ENCODE measurements at regions of chr1 and their contacts with region 1.

Region 1: GRCh38 chr1:167533851-167534300 is 15.5 kb upstream of the CD247 start:
- H3K4me3 Mint-ChIP-seq: no peak overlapping the region
- H3K27ac Mint-ChIP-seq: no peak overlapping the region
- H3K4me1 Mint-ChIP-seq: peaks cover 31% of the 10 kb centered on the region
- H3K27me3 Mint-ChIP-seq: no peaks in the 10 kb centered on the region

Region 2: DNA sequence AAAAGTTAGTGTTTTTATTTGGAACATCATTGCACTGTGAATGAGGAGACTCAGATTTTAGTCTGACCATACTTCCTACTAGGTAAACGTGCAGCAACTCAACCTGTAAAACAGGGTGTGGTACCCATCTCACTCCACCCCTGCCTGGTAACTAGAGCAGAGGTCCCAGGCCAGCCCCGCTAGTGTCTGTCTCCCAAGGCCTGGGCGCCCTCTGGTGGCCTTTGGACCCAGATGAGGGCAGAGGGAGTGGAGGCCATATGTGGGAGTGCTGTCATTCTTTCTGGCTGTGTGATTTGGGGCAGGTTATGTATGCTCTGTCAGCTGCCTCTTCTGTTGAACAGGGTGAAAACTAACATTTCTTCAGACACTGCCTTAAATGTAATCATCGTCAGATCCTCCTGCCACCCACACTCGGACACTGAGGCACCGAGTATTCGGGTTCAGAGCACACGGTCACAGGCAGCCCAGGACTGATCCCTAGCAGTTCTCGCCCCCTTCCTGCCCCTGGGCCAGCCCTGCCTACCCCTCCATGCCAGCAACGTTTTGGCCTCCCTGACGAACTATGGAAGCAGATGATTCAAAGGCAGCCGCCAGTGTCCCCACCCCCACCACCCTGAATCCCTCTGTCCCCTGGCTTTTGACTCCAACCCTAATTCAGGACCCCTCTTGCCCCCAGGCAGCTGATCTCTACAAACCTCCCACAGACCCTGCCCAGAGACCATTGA is 91.6 kb before region 1 on chr1:
- intact Hi-C with region 1: loop called (anchors 5 kb)
- H3K4me3 Mint-ChIP-seq: no peak overlapping the region
- H3K27ac Mint-ChIP-seq: peak overlapping the region; percentile 54
- H3K4me1 Mint-ChIP-seq: peaks cover 43% of the 10 kb centered on the region
- H3K27me3 Mint-ChIP-seq: peaks cover 27% of the 10 kb centered on the region

Region 3: DNA sequence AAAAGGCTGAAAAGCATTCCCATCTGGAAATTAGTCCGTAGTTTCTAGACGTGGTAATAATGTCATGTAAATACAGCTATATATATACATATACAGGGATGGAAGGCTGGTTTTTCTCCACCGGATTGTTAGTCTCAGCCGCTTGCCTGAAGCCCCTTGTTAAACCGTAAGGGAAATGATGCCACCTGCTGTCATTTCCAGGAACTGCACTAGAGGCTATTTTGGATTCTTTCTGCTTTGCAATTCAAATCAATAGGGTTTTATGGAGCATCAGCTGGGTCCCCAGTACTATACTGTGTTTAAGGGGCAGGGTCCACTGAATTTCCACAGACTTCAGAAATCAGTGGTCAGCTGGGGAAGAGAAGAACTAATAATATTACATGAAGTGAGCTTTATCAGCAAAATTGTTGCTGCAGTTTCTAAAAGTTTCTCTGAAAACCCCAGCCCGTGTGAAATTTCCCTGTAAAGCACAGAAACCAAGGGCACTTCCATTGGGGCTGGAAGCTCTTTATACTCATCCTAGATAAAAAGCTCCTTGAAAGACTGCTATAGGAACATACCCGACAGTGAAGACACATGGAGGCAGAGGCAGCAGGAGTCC is 154.1 kb after region 1 on chr1:
- intact Hi-C with region 1: loop called (anchors 5 kb)
- H3K4me3 Mint-ChIP-seq: no peak overlapping the region
- H3K27ac Mint-ChIP-seq: no peak overlapping the region
- H3K4me1 Mint-ChIP-seq: peaks cover 25% of the 10 kb centered on the region
- H3K27me3 Mint-ChIP-seq: no peaks in the 10 kb centered on the region

Measured in dendritic cell treated with granulocyte-macrophage colony-stimulating factor and Interleukin-4, amounts not matched to agents 40 ng/mL and 50 ng/mL, for 4 days (primary cell).